ENCODE measurements at regions of chr16 and their contacts with region 1.

Region 1: GRCh38 chr16:54846766-54847165 is 83.9 kb upstream of the IRX5 start:
- DNase-seq: peak; percentile 81
- H3K4me3 Mint-ChIP-seq: peak overlapping the region; percentile 51
- H3K27ac Mint-ChIP-seq: peak overlapping the region; percentile 94
- H3K4me1 Mint-ChIP-seq: peaks cover 22% of the 10 kb centered on the region
- H3K27me3 Mint-ChIP-seq: no peaks in the 10 kb centered on the region
- CTCF ChIP-seq: no peak

Region 2: GRCh38 chr16:54657058-54657708 is 189.6 kb before region 1 on chr16:
- CTCF ChIA-PET with region 1: interaction called, 5 read pairs
- POLR2A ChIA-PET with region 1: interaction called, 22 read pairs
- intact Hi-C with region 1: no loop called
- DNase-seq: peak; percentile 98
- H3K4me3 Mint-ChIP-seq: peak overlapping the region; percentile 63
- H3K27ac Mint-ChIP-seq: peak overlapping the region; percentile 73
- H3K4me1 Mint-ChIP-seq: peaks cover 38% of the 10 kb centered on the region
- H3K27me3 Mint-ChIP-seq: no peaks in the 10 kb centered on the region
- CTCF ChIP-seq: no peak

Region 3: GRCh38 chr16:54829691-54830090 is 17.1 kb before region 1 on chr16:
- CTCF ChIA-PET with region 1: interaction called, 5 read pairs
- POLR2A ChIA-PET with region 1: interaction called, 10 read pairs
- intact Hi-C with region 1: no loop called
- DNase-seq: no peak
- H3K4me3 Mint-ChIP-seq: no peak overlapping the region
- H3K27ac Mint-ChIP-seq: no peak overlapping the region
- H3K4me1 Mint-ChIP-seq: no peaks in the 10 kb centered on the region
- H3K27me3 Mint-ChIP-seq: no peaks in the 10 kb centered on the region
- CTCF ChIP-seq: no peak

Region 4: DNA sequence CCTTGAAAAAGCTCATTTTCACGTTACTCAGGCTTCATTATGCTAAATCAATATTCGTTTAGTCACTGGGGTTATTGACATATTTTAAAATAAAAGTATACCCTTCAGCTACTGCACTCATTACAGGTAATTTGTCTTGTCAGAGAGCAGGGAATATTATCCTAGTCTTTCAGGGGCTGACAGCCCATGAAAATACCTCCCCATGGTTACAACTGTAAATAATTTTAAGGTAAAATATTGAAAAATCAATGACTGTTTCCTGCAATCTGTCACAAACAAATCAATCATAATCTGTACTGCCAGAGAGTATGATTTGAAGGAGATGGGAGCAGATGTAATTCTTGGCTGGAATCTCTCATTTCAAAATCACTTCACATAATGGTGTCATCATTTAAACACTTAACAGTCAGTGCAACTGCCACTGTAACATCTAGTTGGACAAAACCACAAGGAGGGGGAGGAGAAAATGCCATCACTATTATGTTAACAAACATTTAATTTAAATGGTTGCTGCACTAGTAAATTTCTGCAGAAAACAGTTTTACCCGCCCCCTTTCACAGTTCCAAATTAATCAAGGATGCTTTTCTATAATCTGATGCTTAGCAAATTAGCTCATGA is 74.5 kb after region 1 on chr16:
- CTCF ChIA-PET with region 1: interaction called, 4 read pairs
- POLR2A ChIA-PET with region 1: interaction called, 21 read pairs
- intact Hi-C with region 1: no loop called
- DNase-seq: peak; percentile 77
- H3K4me3 Mint-ChIP-seq: no peak overlapping the region
- H3K27ac Mint-ChIP-seq: peak overlapping the region; percentile 66
- H3K4me1 Mint-ChIP-seq: peaks cover 30% of the 10 kb centered on the region
- H3K27me3 Mint-ChIP-seq: no peaks in the 10 kb centered on the region
- CTCF ChIP-seq: no peak

Region 5: GRCh38 chr16:55078699-55079410 is 232.1 kb after region 1 on chr16:
- CTCF ChIA-PET with region 1: no interaction called
- POLR2A ChIA-PET with region 1: no interaction called
- intact Hi-C with region 1: no loop called
- DNase-seq: no peak
- H3K4me3 Mint-ChIP-seq: no peak overlapping the region
- H3K27ac Mint-ChIP-seq: no peak overlapping the region
- H3K4me1 Mint-ChIP-seq: peaks cover 6% of the 10 kb centered on the region
- H3K27me3 Mint-ChIP-seq: no peaks in the 10 kb centered on the region
- CTCF ChIP-seq: no peak

Measured in MCF 10A (cell line).